BJ (cell line): ENCODE measurements at regions of chr1 and their contacts with region 1.

Region 1: GRCh38 chr1:6523566-6523965 is 30.7 kb downstream of the NOL9 start:
- DNase-seq: no peak
- H3K4me3 ChIP-seq: no peak overlapping the region
- H3K27me3 ChIP-seq: no peaks in the 10 kb centered on the region
- CTCF ChIP-seq: peak; percentile 67

Region 2: DNA sequence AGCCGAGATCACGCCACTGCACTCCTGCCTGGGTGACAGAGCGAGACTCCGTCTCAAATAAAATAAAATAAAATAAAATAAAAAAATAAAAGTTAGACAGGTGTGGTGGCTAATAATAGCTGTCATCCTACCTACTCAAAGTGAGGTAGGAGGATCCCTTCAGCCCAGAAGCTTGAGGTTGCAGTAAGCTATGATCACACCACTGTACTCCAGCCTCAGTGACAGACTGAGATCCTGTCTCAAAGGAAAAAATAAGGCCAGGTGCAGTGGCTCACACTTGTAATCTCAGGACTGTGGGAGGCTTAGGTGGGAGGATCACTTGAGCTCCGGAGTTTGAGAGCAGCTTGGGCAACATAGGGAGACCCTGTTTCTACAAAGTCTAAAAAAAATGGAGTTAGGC is 12.7 kb after region 1 on chr1:
- CTCF ChIA-PET with region 1: interaction called, 10 read pairs
- POLR2A ChIA-PET with region 1: no interaction called
- DNase-seq: no peak
- H3K4me3 ChIP-seq: no peak overlapping the region
- H3K27me3 ChIP-seq: no peaks in the 10 kb centered on the region
- CTCF ChIP-seq: no peak